Endothelial cell of umbilical vein (primary cell): ENCODE measurements at regions of chr18 and their contacts with region 1.

Region 1: GRCh38 chr18:5073026-5073944 is 123.8 kb downstream of the AKAIN1 start:
- DNase-seq: peak; percentile 49
- H3K4me3 ChIP-seq: no peak overlapping the region
- H3K27ac ChIP-seq: no peak overlapping the region
- H3K4me1 ChIP-seq: no peaks in the 10 kb centered on the region
- H3K27me3 ChIP-seq: no peaks in the 10 kb centered on the region
- CTCF ChIP-seq: peak; percentile 11 to 40
- POLR2A ChIP-seq: no peak

Region 2: GRCh38 chr18:5275872-5276271 is 202.6 kb after region 1 on chr18:
- CTCF ChIA-PET with region 1: no interaction called
- POLR2A ChIA-PET with region 1: no interaction called
- dilution Hi-C with region 1: no loop called
- intact Hi-C with region 1: no loop called
- DNase-seq: no peak
- H3K4me3 ChIP-seq: no peak overlapping the region
- H3K27ac ChIP-seq: no peak overlapping the region
- H3K4me1 ChIP-seq: no peaks in the 10 kb centered on the region
- H3K27me3 ChIP-seq: peaks cover 0 to 3% of the 10 kb centered on the region in 2 experiments
- CTCF ChIP-seq: no peak
- POLR2A ChIP-seq: no peak

Region 3: DNA sequence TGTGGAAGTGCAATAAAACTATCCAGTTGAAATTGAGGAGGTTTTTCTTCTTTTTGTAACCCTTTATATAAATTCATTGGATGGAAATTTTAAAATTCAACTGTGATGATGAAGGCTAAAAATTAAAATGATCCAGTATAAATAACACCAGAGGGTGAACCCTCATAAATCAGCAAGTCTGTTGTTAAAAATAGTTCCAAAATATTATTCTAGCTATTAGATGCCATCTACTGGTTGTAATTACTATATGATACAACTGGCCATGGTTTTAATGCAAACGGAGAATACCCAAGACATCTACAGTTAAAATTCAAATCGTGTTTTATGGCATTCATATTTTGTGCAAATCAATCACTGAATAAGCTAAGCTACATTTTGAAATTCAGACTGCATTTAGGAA is 768.2 kb after region 1 on chr18:
- CTCF ChIA-PET with region 1: no interaction called
- POLR2A ChIA-PET with region 1: no interaction called
- dilution Hi-C with region 1: no loop called
- intact Hi-C with region 1: loop called (anchors 1 kb)
- DNase-seq: peak; percentile 2
- H3K4me3 ChIP-seq: no peak overlapping the region
- H3K27ac ChIP-seq: no peak overlapping the region
- H3K4me1 ChIP-seq: no peaks in the 10 kb centered on the region
- H3K27me3 ChIP-seq: no peaks in the 10 kb centered on the region
- CTCF ChIP-seq: no peak
- POLR2A ChIP-seq: no peak